Endothelial cell of umbilical vein (primary cell): ENCODE measurements at regions of chr2 and their contacts with region 1.

Region 1: DNA sequence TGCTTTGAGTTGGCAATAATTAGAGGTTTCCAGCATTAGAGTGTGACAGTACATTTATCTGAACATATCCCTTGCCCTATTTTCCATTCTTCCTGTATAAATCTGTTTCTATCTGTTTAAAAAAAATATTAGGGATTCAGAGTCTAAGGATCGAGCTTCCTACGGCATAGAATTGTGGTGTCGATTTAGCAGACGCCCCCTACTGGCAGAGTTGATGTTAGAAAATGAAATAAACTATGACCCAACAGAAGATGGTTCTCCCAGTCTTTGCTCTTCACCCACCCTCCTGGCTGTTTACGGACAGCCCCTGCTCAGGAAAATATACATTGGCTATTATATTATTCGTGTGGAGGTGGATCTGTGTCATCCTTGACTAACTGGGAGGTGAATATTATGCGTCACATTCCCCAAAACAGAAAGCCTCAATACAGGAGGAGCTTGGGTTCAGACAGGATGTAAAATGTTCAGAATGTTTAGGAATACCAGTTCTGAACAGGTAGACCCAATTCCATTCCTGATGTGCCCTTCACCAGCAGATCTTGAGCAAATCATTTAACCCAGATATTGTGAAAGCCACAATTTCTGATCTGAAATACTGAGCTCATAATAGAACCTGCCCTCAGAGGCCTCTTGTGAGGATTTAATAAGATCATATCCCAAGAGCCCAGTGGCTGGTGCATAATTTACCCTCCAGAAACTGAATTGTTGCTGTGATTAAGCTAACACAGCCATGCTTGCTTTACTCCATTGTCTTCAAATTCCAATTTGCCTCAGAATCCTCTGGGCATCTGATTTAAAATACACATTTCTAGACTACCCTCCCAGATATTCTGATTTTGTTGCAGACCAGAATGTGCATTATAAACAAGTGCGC is 10.8 kb upstream of the ERMN start:
- DNase-seq: peak; percentile 31
- H3K4me3 ChIP-seq: no peak overlapping the region
- H3K27ac ChIP-seq: no peak overlapping the region
- H3K4me1 ChIP-seq: no peaks in the 10 kb centered on the region
- H3K27me3 ChIP-seq: no peaks in the 10 kb centered on the region
- CTCF ChIP-seq: peak; percentile 53 to 74
- POLR2A ChIP-seq: no peak

Region 2: GRCh38 chr2:155368934-155369333 is 1967.4 kb before region 1 on chr2:
- CTCF ChIA-PET with region 1: interaction called, 69 read pairs
- POLR2A ChIA-PET with region 1: no interaction called
- dilution Hi-C with region 1: no loop called
- intact Hi-C with region 1: no loop called
- DNase-seq: peak; percentile 24
- H3K4me3 ChIP-seq: no peak overlapping the region
- H3K27ac ChIP-seq: no peak overlapping the region
- H3K4me1 ChIP-seq: no peaks in the 10 kb centered on the region
- H3K27me3 ChIP-seq: no peaks in the 10 kb centered on the region
- CTCF ChIP-seq: no peak
- POLR2A ChIP-seq: no peak

Region 3: GRCh38 chr2:157311706-157312105 is 24.7 kb before region 1 on chr2:
- CTCF ChIA-PET with region 1: interaction called, 249 read pairs
- POLR2A ChIA-PET with region 1: no interaction called
- dilution Hi-C with region 1: no loop called
- intact Hi-C with region 1: no loop called
- DNase-seq: no peak
- H3K4me3 ChIP-seq: no peak overlapping the region
- H3K27ac ChIP-seq: no peak overlapping the region
- H3K4me1 ChIP-seq: no peaks in the 10 kb centered on the region
- H3K27me3 ChIP-seq: peaks cover 0 to 5% of the 10 kb centered on the region in 2 experiments
- CTCF ChIP-seq: no peak
- POLR2A ChIP-seq: no peak

Region 4: DNA sequence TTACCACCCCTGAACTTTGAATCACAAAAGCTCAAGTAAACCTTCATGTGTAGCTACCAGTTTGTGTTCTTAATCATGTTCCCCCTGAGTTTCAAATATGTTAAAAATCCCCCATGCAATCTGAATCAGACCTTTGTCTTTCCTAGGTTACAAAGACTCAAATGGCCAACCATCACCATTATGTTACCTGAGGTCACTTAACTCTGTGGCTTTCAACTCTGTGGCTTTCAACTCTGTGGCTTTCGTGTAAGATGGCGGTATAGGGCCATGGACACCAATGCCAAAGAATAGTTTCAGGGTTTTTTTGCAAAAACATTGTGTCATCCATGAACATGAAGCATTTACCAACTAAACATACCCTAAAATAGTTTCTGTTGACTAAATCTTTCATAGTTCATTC is 17.5 kb before region 1 on chr2:
- CTCF ChIA-PET with region 1: interaction called, 113 read pairs
- POLR2A ChIA-PET with region 1: no interaction called
- dilution Hi-C with region 1: no loop called
- intact Hi-C with region 1: no loop called
- DNase-seq: no peak
- H3K4me3 ChIP-seq: no peak overlapping the region
- H3K27ac ChIP-seq: no peak overlapping the region
- H3K4me1 ChIP-seq: no peaks in the 10 kb centered on the region
- H3K27me3 ChIP-seq: peaks cover 0 to 4% of the 10 kb centered on the region in 2 experiments
- CTCF ChIP-seq: no peak
- POLR2A ChIP-seq: no peak

Region 5: GRCh38 chr2:157349949-157350515 is 13.7 kb after region 1 on chr2:
- CTCF ChIA-PET with region 1: interaction called, 35 read pairs
- POLR2A ChIA-PET with region 1: no interaction called
- dilution Hi-C with region 1: no loop called
- intact Hi-C with region 1: no loop called
- DNase-seq: no peak
- H3K4me3 ChIP-seq: no peak overlapping the region
- H3K27ac ChIP-seq: no peak overlapping the region
- H3K4me1 ChIP-seq: no peaks in the 10 kb centered on the region
- H3K27me3 ChIP-seq: no peaks in the 10 kb centered on the region
- CTCF ChIP-seq: no peak
- POLR2A ChIP-seq: no peak

Region 6: DNA sequence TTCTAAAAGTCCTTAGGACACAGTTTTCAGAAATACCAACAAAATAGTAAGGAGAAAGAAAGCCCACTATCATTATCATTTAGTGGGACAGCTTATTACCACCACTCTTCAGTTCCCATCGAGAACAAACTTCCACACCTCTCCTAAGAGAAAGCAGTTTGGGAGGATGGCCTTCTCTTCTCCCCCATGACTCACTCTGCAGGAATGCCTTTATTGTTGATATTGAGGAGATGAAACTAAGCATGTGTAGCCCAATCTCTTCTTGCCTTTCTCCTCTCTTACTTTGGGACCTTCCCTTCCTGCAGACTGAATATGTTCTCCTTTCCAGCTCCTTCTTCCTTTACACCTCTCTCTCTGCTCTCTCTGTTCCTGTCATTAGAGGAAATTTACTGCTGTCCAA is 19.2 kb after region 1 on chr2:
- CTCF ChIA-PET with region 1: interaction called, 15 read pairs
- POLR2A ChIA-PET with region 1: no interaction called
- dilution Hi-C with region 1: no loop called
- intact Hi-C with region 1: no loop called
- DNase-seq: no peak
- H3K4me3 ChIP-seq: no peak overlapping the region
- H3K27ac ChIP-seq: no peak overlapping the region
- H3K4me1 ChIP-seq: no peaks in the 10 kb centered on the region
- H3K27me3 ChIP-seq: no peaks in the 10 kb centered on the region
- CTCF ChIP-seq: no peak
- POLR2A ChIP-seq: no peak

Region 7: GRCh38 chr2:157777427-157777826 is 441.1 kb after region 1 on chr2:
- CTCF ChIA-PET with region 1: no interaction called
- POLR2A ChIA-PET with region 1: no interaction called
- dilution Hi-C with region 1: no loop called
- intact Hi-C with region 1: no loop called
- DNase-seq: peak; percentile 74
- H3K4me3 ChIP-seq: no peak overlapping the region
- H3K27ac ChIP-seq: no peak overlapping the region
- H3K4me1 ChIP-seq: no peaks in the 10 kb centered on the region
- H3K27me3 ChIP-seq: no peaks in the 10 kb centered on the region
- CTCF ChIP-seq: peak; percentile 39 to 50
- POLR2A ChIP-seq: no peak